ENCODE measurements at regions of chr13 and their contacts with region 1.

Region 1: DNA sequence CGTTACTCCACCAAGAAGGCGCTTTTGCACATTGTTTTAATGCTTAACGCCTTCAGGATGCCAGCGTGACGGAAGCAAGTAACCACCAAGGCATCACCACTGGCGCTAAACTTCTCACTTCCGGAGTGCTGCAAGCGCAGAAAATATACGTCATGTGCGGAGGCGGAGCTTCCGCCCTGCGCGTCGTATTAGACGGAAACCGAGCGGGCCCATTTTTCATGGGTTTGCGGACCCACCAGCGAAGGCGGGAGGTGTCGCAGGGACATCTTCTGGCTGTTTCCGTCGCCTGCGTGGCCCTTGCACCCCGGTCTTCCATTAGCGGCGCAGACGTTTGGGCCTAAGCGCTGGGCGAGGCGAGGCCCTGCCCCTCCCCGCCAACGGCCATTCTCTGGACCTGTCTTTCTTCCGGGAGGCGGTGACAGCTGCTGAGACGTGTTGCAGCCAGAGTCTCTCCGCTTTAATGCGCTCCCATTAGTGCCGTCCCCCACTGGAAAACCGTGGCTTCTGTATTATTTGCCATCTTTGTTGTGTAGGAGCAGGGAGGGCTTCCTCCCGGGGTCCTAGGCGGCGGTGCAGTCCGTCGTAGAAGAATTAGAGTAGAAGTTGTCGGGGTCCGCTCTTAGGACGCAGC is at the start of gene ERCC5:
- DNase-seq: peak; percentile 94
- H3K4me3 ChIP-seq: peak within 1 kb of the TSS; percentile 91
- H3K27ac ChIP-seq: peak within 1 kb of the TSS; percentile 99
- H3K4me1 ChIP-seq: peaks cover 6% of the 10 kb centered on the region
- H3K27me3 ChIP-seq: no peaks in the 10 kb centered on the region
- CTCF ChIP-seq: no peak
- total RNA-seq, gene ERCC5: 64.7 to 79.1 TPM

Region 2: GRCh38 chr13:102580552-102581169 is 265.1 kb before region 1 on chr13:
- intact Hi-C with region 1: loop called (anchors 5 kb)
- DNase-seq: peak; percentile 55
- H3K4me3 ChIP-seq: no peak overlapping the region
- H3K27ac ChIP-seq: no peak overlapping the region
- H3K4me1 ChIP-seq: no peaks in the 10 kb centered on the region
- H3K27me3 ChIP-seq: no peaks in the 10 kb centered on the region
- CTCF ChIP-seq: peak; percentile 74

Region 3: GRCh38 chr13:102596147-102597028 is 249.4 kb before region 1 on chr13 and contains the start of gene TPP2:
- intact Hi-C with region 1: loop called (anchors 5 kb)
- DNase-seq: peak; percentile 99
- H3K4me3 ChIP-seq: peak within 1 kb of the TSS; percentile 93
- H3K27ac ChIP-seq: peak within 1 kb of the TSS; percentile 93
- H3K4me1 ChIP-seq: no peaks in the 10 kb centered on the region
- H3K27me3 ChIP-seq: no peaks in the 10 kb centered on the region
- CTCF ChIP-seq: no peak
- total RNA-seq, gene TPP2: 41.0 to 42.0 TPM

Region 4: GRCh38 chr13:102773441-102774215 is 72.1 kb before region 1 on chr13 and contains the start of gene TEX30:
- intact Hi-C with region 1: loop called (anchors 10 kb)
- DNase-seq: peak; percentile 83
- H3K4me3 ChIP-seq: peak within 1 kb of the TSS; percentile 82
- H3K27ac ChIP-seq: peak within 1 kb of the TSS; percentile 77
- H3K4me1 ChIP-seq: no peaks in the 10 kb centered on the region
- H3K27me3 ChIP-seq: no peaks in the 10 kb centered on the region
- CTCF ChIP-seq: no peak
- total RNA-seq, gene TEX30: 3.7 to 8.3 TPM

Region 5: DNA sequence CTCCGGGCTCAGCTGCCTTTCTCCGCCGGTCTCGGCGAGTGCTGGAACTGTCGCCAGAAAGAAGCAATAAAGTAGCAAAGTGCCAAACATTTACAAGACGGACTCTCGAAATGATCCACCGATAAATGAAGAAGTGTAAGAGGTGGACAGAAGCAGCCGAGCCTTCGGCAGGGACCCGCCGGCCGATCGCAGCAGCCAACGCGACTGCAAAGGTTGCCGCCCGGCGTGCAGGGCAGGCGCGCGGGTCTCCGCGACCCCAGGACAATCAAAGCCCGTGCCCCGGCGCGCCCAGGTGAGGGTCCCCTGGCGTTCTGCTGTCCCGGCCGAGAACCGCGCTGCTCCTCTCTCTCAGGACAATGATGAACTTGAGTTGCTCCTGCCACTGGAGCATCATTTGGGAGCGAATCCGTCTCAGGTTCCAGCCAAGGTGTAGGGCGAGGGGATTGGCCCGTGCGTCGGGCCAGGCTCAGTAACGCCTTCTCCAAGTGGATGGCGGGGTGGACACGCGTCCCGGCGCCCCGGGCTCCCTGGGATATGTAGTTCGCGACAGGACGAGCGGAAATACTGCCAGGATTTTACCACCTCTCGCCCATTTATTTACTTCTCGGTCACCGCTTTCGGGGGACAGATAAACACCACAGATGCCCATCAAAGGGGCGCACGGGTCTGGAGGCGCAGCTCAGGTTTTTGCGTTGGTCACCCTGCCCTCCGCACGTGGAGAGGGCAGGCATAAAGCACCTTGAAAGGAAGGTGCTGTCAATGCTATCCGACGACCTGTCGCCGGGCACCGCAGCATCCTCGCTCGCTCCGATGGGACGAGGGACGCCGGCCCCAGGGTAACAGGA is 46.9 kb before region 1 on chr13 and contains the starts of genes BIVM and POGLUT2:
- intact Hi-C with region 1: loop called (anchors 5 kb)
- DNase-seq: peak; percentile 94
- H3K4me3 ChIP-seq: peak within 1 kb of the TSS; percentile 67
- H3K27ac ChIP-seq: peak within 1 kb of the TSS; percentile 27
- H3K4me1 ChIP-seq: no peaks in the 10 kb centered on the region
- H3K27me3 ChIP-seq: no peaks in the 10 kb centered on the region
- CTCF ChIP-seq: no peak
- total RNA-seq, gene BIVM: 11.8 to 15.5 TPM
- total RNA-seq, gene POGLUT2: 1.3 to 2.8 TPM